OCI-LY7 (cell line): ENCODE measurements at regions of chrX and their contacts with region 1.

Region 1: DNA sequence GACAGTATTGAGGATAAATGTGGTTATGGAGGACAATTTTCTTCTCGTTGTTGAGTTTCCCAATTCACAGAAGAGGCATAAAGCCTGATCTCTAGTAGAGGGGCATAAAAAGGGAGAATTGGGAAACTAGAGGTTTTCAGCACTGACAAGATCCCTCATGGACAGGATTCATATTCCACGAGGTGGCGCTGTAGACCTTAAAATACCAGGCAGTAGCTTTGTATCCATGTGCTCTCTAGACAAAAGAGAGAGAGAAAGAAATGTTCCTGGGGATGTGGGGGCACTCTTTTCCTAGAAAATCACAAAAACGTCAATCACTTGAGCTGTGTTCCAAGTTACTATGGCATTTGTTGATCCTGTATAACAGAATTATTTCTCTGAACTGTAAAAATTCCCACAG is 128.3 kb downstream of the MAGEE1 start:
- DNase-seq: peak; percentile 61
- H3K4me3 ChIP-seq: no peak overlapping the region
- H3K27ac ChIP-seq: no peak overlapping the region
- H3K4me1 ChIP-seq: no peaks in the 10 kb centered on the region
- CTCF ChIP-seq: peak; percentile 72

Region 2: DNA sequence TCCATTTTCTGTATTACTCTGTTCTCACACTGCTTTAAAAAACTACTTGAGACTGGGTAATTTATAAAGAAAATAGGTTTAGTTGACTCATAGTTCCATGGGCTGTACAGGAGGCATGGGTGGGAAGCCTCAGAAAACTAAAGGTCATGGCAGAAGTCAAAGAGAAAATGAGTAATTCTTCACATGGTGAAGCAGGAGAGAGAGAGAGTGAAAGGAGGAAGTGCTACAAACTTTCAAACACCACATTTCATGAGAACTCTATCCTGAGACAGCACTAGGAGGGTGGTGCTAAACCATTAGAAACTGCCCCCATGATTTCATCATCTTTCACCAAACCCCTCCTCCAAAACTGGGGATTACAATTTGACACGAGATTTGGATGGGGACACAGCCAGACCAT is 491.0 kb before region 1 on chrX:
- CTCF ChIA-PET with region 1: no interaction called
- POLR2A ChIA-PET with region 1: no interaction called
- intact Hi-C with region 1: no loop called
- DNase-seq: no peak
- H3K4me3 ChIP-seq: no peak overlapping the region
- H3K27ac ChIP-seq: no peak overlapping the region
- H3K4me1 ChIP-seq: no peaks in the 10 kb centered on the region
- CTCF ChIP-seq: no peak

Region 3: DNA sequence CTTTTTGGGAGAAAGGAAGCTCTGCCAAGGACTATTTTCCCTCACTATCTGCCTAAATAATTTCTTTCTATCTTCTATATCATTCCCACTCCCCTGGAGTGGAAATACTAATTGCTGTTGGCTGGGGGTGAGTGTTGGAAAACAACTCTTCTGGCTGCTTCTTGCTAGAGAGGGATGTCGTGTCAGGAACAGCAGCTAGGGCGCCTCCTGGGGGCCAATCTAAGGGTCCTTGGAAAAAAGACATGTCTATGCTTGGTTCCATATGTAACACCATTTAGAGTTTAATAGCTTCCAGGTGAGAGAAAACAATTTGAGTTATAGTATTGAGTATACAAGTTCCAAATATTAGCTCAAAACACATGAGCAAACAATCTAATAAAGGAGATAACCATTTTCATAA is 17.0 kb before region 1 on chrX:
- CTCF ChIA-PET with region 1: no interaction called
- POLR2A ChIA-PET with region 1: no interaction called
- intact Hi-C with region 1: no loop called
- DNase-seq: no peak
- H3K4me3 ChIP-seq: no peak overlapping the region
- H3K27ac ChIP-seq: no peak overlapping the region
- H3K4me1 ChIP-seq: no peaks in the 10 kb centered on the region
- CTCF ChIP-seq: no peak

Region 4: GRCh38 chrX:77426811-77427210 is 871.0 kb after region 1 on chrX:
- CTCF ChIA-PET with region 1: no interaction called
- POLR2A ChIA-PET with region 1: no interaction called
- intact Hi-C with region 1: loop called (anchors 10 kb)
- DNase-seq: no peak
- H3K4me3 ChIP-seq: no peak overlapping the region
- H3K27ac ChIP-seq: no peak overlapping the region
- H3K4me1 ChIP-seq: peaks cover 14% of the 10 kb centered on the region
- CTCF ChIP-seq: no peak

Region 5: DNA sequence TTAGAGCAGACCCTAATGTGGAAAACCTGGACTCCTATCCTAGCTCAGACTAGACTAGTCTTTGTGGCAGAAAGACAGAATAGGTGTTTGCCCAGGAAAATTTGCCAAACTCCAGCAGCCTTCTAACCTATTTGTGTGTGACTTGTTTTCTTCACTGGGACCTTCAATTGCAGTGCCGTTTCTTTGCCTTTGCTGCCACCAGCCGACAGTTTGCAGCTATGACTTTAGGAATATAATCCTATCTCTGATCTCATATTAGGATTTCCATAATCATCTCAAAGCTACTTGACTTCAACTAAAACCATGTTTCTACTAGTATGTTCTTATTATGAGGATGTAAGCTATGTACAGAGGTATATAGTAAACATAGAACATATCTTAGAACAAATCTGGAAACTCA is 1473.8 kb after region 1 on chrX:
- CTCF ChIA-PET with region 1: no interaction called
- POLR2A ChIA-PET with region 1: no interaction called
- intact Hi-C with region 1: loop called (anchors 5 kb)
- DNase-seq: peak; percentile 45
- H3K4me3 ChIP-seq: no peak overlapping the region
- H3K27ac ChIP-seq: no peak overlapping the region
- H3K4me1 ChIP-seq: no peaks in the 10 kb centered on the region
- CTCF ChIP-seq: peak; percentile 80